Endothelial cell of umbilical vein (primary cell): ENCODE measurements at regions of chr2 and their contacts with region 1.

Region 1: GRCh38 chr2:197399887-197400540 is 34.8 kb downstream of the SF3B1 start:
- DNase-seq: no peak
- H3K4me3 ChIP-seq: no peak overlapping the region
- H3K27ac ChIP-seq: no peak overlapping the region
- H3K4me1 ChIP-seq: no peaks in the 10 kb centered on the region
- H3K27me3 ChIP-seq: no peaks in the 10 kb centered on the region
- CTCF ChIP-seq: no peak
- POLR2A ChIP-seq: no peak

Region 2: DNA sequence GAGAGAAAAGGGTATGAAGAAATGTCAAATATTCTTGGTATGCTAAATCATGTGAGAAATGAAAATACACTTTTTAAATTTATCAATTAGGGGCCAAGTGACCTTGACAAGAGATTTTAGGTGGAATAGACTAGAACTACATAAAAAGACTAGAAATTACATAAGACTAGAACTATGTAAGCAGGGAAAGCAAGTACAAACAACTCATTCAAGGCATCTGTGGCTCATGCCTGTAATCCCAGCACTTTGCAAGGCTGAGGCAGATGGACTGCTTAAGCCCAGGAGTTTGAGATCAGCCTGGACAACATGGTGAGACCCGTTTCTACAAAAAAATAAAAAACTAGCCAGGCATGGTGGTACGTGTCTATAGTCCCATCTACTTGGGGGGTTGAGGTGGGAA is 14.5 kb after region 1 on chr2:
- CTCF ChIA-PET with region 1: interaction called, 3 read pairs
- POLR2A ChIA-PET with region 1: no interaction called
- dilution Hi-C with region 1: no loop called
- intact Hi-C with region 1: loop called (anchors 2 kb)
- DNase-seq: no peak
- H3K4me3 ChIP-seq: no peak overlapping the region
- H3K27ac ChIP-seq: no peak overlapping the region
- H3K4me1 ChIP-seq: no peaks in the 10 kb centered on the region
- H3K27me3 ChIP-seq: no peaks in the 10 kb centered on the region
- CTCF ChIP-seq: no peak
- POLR2A ChIP-seq: no peak

Region 3: DNA sequence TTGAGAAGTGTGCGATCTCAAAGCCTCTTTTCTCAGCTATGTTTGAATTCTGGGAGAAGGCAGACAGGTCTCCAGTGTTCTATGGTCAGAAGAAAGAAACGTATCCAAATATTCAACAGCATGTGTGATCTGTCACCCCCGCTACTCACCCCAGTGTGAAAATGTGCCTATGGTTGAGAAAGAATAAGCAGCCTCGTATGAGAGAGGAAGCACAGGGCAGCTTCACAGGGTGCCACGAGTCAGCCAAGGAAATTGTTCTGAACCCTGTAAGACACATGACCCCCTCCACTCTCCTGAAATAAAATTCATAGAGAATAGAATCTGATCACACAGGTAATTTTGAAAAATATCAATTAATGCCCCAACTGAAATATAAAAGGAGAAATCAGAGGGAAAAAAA is 42.8 kb after region 1 on chr2:
- CTCF ChIA-PET with region 1: no interaction called
- POLR2A ChIA-PET with region 1: no interaction called
- dilution Hi-C with region 1: no loop called
- intact Hi-C with region 1: no loop called
- DNase-seq: no peak
- H3K4me3 ChIP-seq: no peak overlapping the region
- H3K27ac ChIP-seq: no peak overlapping the region
- H3K4me1 ChIP-seq: peaks cover 9% of the 10 kb centered on the region
- H3K27me3 ChIP-seq: no peaks in the 10 kb centered on the region
- CTCF ChIP-seq: no peak
- POLR2A ChIP-seq: no peak

Region 4: DNA sequence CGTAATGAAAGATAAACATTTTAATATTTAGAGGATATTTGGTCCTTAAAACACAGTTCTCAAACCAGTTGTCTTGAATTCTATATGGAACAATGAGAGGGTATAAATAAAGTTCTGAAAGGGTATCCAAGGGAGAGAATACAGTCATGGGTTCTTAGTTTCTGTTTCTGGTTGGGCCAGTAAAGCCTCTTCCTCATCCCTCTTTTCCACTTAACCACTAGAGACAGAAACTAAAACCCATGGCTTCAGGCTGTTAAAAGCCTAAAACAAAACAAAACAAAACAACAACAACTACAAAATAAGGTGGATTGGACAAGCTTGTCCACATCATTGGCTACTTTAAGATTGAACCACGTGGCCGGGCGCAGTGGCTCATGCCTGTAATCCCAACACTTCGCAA is 72.2 kb after region 1 on chr2:
- CTCF ChIA-PET with region 1: no interaction called
- POLR2A ChIA-PET with region 1: no interaction called
- dilution Hi-C with region 1: no loop called
- intact Hi-C with region 1: loop called (anchors 5 kb)
- DNase-seq: no peak
- H3K4me3 ChIP-seq: no peak overlapping the region
- H3K27ac ChIP-seq: no peak overlapping the region
- H3K4me1 ChIP-seq: no peaks in the 10 kb centered on the region
- H3K27me3 ChIP-seq: no peaks in the 10 kb centered on the region
- CTCF ChIP-seq: no peak
- POLR2A ChIP-seq: no peak

Region 5: GRCh38 chr2:197487385-197487784 is 87.4 kb after region 1 on chr2:
- CTCF ChIA-PET with region 1: no interaction called
- POLR2A ChIA-PET with region 1: no interaction called
- dilution Hi-C with region 1: no loop called
- intact Hi-C with region 1: loop called (anchors 5 kb)
- DNase-seq: no peak
- H3K4me3 ChIP-seq: no peak overlapping the region
- H3K27ac ChIP-seq: no peak overlapping the region
- H3K4me1 ChIP-seq: no peaks in the 10 kb centered on the region
- H3K27me3 ChIP-seq: no peaks in the 10 kb centered on the region
- CTCF ChIP-seq: no peak
- POLR2A ChIP-seq: no peak